Activated CD4-positive, alpha-beta T cell treated with anti-CD3 and anti-CD28 coated beads, Interleukin-2, amount 10 ng/mL, durations not matched to agents 24 days and 14 days (primary cell): ENCODE measurements at regions of chr1 and their contacts with region 1.

Region 1: GRCh38 chr1:113978863-113979702 is at the start of gene OLFML3:
- DNase-seq: peak; percentile 82
- H3K4me3 Mint-ChIP-seq: no peak within 1 kb of the TSS
- H3K27ac Mint-ChIP-seq: peak within 1 kb of the TSS; percentile 10
- H3K4me1 Mint-ChIP-seq: peaks cover 37% of the 10 kb centered on the region
- H3K27me3 Mint-ChIP-seq: no peaks in the 10 kb centered on the region
- total RNA-seq, gene OLFML3: 0.09 TPM in 1 of 2 replicates, not detected in the other

Region 2: DNA sequence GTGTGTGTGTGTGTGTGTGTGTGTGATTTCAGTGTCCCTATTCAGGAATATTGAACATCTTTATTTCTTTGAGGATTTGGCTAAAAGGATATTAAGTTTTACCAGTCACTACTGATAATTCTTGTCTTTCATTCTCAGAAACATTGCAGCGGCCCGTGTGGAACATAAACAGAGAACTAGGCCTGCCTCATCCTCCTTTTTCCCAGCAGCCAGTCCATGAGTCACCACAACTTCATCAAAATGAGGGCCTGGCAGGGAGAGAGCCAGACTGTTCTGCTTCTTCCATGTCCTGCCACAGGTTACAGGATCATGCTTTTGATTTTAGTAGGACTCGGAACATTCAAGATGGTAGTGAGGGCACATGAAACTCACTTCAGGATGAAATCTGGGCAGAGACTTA is 855.3 kb before region 1 on chr1:
- intact Hi-C with region 1: loop called (anchors 10 kb)
- DNase-seq: no peak
- H3K4me3 Mint-ChIP-seq: no peak overlapping the region
- H3K27ac Mint-ChIP-seq: no peak overlapping the region
- H3K4me1 Mint-ChIP-seq: no peaks in the 10 kb centered on the region
- H3K27me3 Mint-ChIP-seq: no peaks in the 10 kb centered on the region

Region 3: DNA sequence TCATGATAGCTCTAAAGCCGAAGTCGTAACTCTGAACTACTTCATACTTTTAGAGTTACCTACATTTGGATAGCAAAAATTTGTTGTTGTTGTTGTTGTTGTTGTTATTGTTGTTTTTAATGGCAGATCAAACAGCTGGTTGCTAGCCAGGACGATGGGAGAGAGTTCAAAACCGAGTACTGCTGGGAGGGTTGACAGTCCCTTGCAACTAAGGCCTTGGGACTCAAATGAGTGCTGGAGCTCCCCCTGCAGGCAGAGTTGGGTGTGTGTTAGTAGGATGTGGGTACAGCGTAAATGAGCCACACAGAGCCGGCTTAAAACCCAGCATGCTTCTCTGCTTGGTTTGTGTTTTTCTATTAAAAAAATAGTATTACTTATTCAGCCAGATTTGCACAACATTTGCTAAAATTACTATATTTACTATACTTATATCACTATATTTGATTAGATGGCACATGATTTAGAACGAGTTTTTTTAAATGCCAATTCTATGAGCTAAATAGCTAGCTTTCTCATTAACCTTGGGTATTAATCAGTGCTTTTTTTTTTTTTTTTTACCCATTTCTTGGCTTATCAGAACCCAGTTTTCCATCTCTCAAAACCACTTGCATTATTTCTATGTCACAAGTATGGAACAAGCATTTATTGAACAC is 303.8 kb after region 1 on chr1:
- intact Hi-C with region 1: loop called (anchors 1 kb)
- DNase-seq: peak; percentile 93
- H3K4me3 Mint-ChIP-seq: no peak overlapping the region
- H3K27ac Mint-ChIP-seq: no peak overlapping the region
- H3K4me1 Mint-ChIP-seq: no peaks in the 10 kb centered on the region
- H3K27me3 Mint-ChIP-seq: peaks cover 10% of the 10 kb centered on the region

Region 4: GRCh38 chr1:114558544-114558943 is 579.5 kb after region 1 on chr1:
- intact Hi-C with region 1: loop called (anchors 5 kb)
- DNase-seq: no peak
- H3K4me3 Mint-ChIP-seq: no peak overlapping the region
- H3K27ac Mint-ChIP-seq: no peak overlapping the region
- H3K4me1 Mint-ChIP-seq: peaks cover 3% of the 10 kb centered on the region
- H3K27me3 Mint-ChIP-seq: no peaks in the 10 kb centered on the region